Right ventricle myocardium inferior (tissue), 1 donor: ENCODE measurements at regions of chr16 and their contacts with region 1.

Region 1: DNA sequence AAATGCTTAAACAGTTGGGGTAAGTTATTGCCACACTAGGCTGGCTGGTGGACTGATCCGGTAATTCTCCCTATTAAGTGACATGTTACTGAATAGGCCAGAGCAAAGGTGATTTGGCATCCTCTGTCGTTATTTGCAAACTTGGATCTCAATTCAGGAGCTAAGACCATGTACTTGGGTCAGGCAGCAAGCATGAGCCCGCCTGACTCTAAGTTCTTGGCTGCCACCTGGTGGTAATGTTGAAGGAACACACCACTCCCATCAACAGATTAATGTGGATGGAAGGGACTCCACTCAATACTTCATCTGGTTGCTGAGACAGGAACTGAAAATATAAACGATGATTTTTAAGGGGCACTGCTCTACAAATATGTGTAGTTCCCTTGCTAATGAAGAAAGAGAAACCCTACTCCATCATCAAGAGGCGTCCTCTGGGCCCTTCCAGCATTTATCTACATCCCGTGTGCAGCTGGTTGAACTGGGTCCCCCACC is 70.8 kb downstream of the EMP2 start:
- DNase-seq: no peak
- ATAC-seq: peak; percentile 92

Region 2: DNA sequence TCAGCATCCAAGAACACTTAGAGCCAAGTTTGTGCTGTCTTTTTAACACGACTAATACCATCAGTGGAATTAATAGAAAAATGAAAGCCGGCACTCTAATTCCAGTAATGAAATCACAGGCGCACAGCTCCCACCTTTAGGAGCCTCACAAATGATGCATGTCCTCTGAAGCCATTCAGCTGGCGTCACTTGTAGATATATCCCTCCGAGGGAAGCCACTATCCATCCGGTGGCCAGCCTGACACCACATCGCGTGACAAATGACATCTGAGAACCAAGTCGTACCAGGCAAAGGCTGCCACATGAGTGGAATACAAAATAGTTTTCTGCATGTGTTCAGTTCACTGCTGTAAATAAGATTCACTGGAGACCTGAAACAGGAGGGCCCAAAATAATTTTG is 533.0 kb before region 1 on chr16:
- intact Hi-C with region 1: no loop called
- DNase-seq: no peak
- ATAC-seq: no peak

Region 3: DNA sequence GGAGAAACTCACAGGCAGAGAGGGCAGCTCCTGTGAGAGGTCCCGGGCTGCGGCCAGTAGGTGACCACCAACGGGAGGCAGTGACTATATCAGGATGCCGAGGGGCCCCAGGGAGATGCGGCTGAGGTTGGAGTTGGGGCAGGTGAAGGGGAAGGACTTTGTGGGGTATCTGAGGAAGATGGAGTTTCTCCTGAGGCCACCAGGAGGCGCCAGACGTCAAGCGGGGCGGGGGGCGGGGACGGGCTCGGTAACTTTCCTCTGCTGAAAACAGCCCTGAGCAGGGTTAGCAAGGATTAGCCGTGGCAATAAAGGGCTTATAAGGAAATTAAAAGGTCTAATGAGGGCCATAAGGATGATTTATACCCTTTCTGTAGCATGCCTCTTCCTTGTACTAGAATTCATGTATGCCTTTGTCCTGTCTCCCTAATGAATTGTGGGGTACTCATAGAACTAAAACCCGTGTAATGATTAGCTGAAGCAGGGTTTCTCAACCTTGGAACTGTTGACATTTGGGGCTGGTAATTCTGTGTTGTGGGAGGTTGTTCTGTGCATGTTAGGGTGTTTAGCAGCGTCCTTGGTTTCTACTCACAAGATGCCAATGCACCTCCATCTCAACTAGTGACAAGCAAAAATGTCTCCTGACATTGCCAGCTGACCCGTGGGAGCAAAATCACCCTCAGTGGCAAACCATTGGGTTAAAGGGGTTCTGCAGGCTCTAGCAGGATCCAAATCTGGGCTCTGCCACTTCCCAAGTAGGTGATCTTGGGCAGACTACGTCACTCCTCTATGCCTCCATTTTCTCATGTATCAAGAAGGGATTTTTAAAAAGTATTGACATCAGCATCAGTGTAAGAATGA is 252.6 kb before region 1 on chr16:
- intact Hi-C with region 1: loop called (anchors 5 kb)
- DNase-seq: no peak
- ATAC-seq: no peak

Region 4: DNA sequence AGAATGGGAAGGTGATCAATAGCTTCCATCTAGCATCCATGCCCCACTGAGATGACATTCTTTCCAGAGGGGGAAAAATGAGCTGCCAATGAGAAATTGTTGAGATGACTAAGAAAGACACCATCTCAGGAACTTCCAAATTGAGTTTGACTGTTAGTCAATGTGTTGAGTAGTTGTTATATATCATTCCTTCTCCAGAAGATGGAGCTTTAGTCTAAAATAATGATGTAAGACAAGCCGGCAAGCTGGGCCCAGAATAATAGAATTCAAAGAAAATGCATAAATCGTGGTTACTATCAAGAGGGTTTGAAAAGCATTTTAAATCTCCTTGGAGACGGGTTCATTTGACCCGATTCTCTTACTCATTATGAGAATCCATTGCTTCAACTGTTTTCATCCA is 194.8 kb before region 1 on chr16:
- intact Hi-C with region 1: loop called (anchors 1 kb)
- DNase-seq: no peak
- ATAC-seq: no peak

Region 5: DNA sequence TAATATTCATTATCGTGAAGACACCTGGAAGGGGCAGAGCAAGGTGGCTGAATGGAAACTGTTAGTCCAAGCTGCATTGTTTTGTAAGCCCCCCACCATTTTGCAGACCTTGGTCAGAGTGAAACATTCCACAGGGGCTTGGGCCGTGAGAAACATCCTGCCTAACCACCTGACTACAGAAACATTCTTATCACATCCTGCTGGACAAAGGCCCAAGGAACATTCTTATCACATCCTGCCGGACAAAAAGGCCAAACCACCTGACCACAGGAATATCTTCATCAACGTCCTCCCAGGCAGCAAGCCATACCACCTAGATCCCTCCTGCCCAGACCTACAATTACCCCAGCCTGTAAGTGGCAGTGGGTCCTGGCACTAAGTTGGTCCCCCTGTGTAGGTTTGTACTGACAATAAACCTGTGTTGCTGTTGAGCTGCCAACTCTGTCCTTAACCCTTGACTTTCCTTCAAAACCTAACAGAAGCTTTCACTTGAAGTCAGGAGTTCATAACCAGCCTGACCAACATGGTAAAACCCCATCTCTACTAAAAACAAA is 104.1 kb before region 1 on chr16:
- intact Hi-C with region 1: no loop called
- DNase-seq: no peak
- ATAC-seq: peak; percentile 44

Region 6: GRCh38 chr16:10678655-10679054 is 169.1 kb after region 1 on chr16:
- intact Hi-C with region 1: loop called (anchors 10 kb)
- DNase-seq: no peak
- ATAC-seq: no peak

Region 7: GRCh38 chr16:10737068-10737625 is 227.6 kb after region 1 on chr16:
- intact Hi-C with region 1: loop called (anchors 1 kb)
- DNase-seq: no peak
- ATAC-seq: peak; percentile 60

Region 8: DNA sequence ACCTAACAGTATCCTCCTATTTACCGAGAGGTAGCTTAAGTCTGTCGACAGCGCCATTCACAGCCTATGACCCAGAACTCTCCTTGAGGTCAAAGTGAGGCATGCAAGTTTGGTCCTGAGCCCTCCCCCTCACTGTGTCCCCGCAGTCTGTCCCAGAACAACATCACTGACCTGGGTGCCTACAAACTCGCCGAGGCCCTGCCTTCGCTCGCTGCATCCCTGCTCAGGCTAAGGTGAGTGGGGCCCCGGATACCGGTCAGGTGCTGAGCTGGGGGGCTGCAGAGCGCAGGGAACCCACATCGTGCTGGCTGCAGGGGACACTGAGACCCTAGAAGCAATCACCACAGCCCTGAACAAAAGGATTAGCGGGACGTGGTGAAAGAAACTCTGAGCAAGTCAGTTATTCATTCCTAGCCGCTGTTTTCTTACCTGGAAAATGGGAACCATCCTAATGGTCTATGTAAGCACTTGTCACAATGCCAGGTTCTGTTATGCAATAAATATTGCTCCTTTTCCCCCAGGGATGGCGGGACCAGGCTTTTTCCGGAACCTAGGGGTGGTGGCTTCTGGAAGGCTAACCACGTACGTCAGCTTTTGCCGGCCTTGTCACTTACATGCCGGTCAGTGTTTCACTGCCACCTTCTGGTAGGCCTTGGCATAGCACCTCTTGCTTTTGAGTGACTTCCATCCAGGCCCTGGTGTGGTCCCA is 408.9 kb after region 1 on chr16:
- intact Hi-C with region 1: loop called (anchors 10 kb)
- DNase-seq: peak; percentile 94
- ATAC-seq: peak; percentile 81